Sciatic nerve (tissue), 2 donors: ENCODE measurements at regions of chr6 and their contacts with region 1.

Region 1: GRCh38 chr6:6230288-6230687 is 90.2 kb downstream of the F13A1 start:
- DNase-seq: no peak
- ATAC-seq: no peak

Region 2: GRCh38 chr6:6533176-6533575 is 302.9 kb after region 1 on chr6:
- intact Hi-C with region 1: loop called (anchors 5 kb)
- DNase-seq: no peak
- ATAC-seq: no peak